Naive thymus-derived CD4-positive, alpha-beta T cell (primary cell): ENCODE measurements at regions of chr5 and their contacts with region 1.

Region 1: GRCh38 chr5:172479044-172479783 is 24.9 kb upstream of the SH3PXD2B start:
- DNase-seq: peak in 8 of 9 donors; percentile 27 to 63 (median 44)
- ATAC-seq: peak; percentile 90
- H3K4me3 ChIP-seq: no peak overlapping the region
- H3K4me3 Mint-ChIP-seq: no peak overlapping the region
- H3K27ac ChIP-seq: no peak overlapping the region
- H3K27ac Mint-ChIP-seq: no peak overlapping the region
- H3K4me1 ChIP-seq: no peaks in the 10 kb centered on the region
- H3K4me1 Mint-ChIP-seq: no peaks in the 10 kb centered on the region
- H3K27me3 ChIP-seq: no peaks in the 10 kb centered on the region
- H3K27me3 Mint-ChIP-seq: peaks cover 0 to 9% (median 0%) of the 10 kb centered on the region in 5 donors

Region 2: DNA sequence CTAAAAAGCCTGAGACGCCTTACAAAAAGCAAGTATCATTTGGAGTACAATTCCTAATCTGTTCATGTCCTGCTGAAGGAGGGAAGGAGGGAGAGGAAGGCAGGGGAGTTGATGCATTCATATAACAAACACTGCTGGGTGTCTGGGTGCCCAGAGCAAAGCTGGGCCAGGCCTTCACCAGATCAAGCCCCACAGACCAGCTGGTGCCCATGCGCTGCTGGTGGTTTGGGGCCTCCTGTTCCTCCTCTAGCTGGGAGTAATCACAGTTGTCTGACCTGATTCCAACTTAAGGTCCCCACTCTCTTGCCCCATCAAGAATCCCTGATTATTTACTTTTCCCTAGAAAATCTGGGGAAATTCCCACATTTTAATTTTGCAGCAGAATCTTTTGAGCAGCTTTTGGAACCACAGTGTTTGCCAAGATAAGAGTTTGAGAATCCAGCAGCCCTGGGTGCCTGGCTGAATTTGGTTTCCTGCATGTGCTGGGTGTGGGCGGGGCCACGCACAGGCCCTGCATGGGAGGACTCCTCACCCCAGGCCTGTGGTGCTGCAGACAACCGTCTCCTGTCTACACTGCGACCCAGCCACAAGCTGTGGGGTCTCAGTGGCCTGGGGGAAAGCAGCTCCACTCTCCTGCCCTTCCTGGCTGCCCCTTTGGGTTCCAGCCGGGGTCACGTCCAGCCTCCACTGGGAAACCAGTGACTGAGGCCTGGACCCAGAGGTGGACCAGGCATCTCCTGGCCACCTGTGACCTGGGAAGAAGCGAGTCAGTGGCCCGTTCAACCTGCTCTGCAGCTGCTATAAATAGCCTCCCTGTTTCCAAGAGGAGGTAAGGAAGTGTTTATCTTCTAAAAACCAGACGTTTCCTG is 209.4 kb after region 1 on chr5:
- CTCF ChIA-PET with region 1: interaction called, 3 read pairs
- POLR2A ChIA-PET with region 1: no interaction called
- intact Hi-C with region 1: loop called in 1 of 2 experiments (anchors 1 kb)
- DNase-seq: peak in 8 of 9 donors; percentile 38 to 62 (median 48)
- ATAC-seq: peak; percentile 68
- H3K4me3 ChIP-seq: no peak overlapping the region
- H3K4me3 Mint-ChIP-seq: peak overlapping the region in 3 of 10 donors; percentile 3 to 41 (median 17)
- H3K27ac ChIP-seq: peak overlapping the region; percentile 64
- H3K27ac Mint-ChIP-seq: peak overlapping the region; percentile 73 to 91 (median 85)
- H3K4me1 ChIP-seq: peaks cover 0 to 14% of the 10 kb centered on the region in 2 donors
- H3K4me1 Mint-ChIP-seq: peaks cover 9 to 21% (median 16%) of the 10 kb centered on the region in 7 donors
- H3K27me3 ChIP-seq: no peaks in the 10 kb centered on the region
- H3K27me3 Mint-ChIP-seq: peaks cover 0 to 9% (median 0%) of the 10 kb centered on the region in 5 donors

Region 3: GRCh38 chr5:172932313-172933017 is 453.3 kb after region 1 on chr5:
- CTCF ChIA-PET with region 1: no interaction called
- POLR2A ChIA-PET with region 1: no interaction called
- intact Hi-C with region 1: loop called in 1 of 2 experiments (anchors 1 kb)
- DNase-seq: peak; percentile 53 to 79 (median 68)
- ATAC-seq: peak; percentile 98
- H3K4me3 ChIP-seq: no peak overlapping the region
- H3K4me3 Mint-ChIP-seq: no peak overlapping the region
- H3K27ac ChIP-seq: no peak overlapping the region
- H3K27ac Mint-ChIP-seq: peak overlapping the region in 8 of 9 donors; percentile 25 to 82 (median 52)
- H3K4me1 ChIP-seq: no peaks in the 10 kb centered on the region
- H3K4me1 Mint-ChIP-seq: peaks cover 0 to 13% (median 6%) of the 10 kb centered on the region in 7 donors
- H3K27me3 ChIP-seq: no peaks in the 10 kb centered on the region
- H3K27me3 Mint-ChIP-seq: no peaks in the 10 kb centered on the region